ENCODE measurements at regions of chr9 and their contacts with region 1.

Region 1: DNA sequence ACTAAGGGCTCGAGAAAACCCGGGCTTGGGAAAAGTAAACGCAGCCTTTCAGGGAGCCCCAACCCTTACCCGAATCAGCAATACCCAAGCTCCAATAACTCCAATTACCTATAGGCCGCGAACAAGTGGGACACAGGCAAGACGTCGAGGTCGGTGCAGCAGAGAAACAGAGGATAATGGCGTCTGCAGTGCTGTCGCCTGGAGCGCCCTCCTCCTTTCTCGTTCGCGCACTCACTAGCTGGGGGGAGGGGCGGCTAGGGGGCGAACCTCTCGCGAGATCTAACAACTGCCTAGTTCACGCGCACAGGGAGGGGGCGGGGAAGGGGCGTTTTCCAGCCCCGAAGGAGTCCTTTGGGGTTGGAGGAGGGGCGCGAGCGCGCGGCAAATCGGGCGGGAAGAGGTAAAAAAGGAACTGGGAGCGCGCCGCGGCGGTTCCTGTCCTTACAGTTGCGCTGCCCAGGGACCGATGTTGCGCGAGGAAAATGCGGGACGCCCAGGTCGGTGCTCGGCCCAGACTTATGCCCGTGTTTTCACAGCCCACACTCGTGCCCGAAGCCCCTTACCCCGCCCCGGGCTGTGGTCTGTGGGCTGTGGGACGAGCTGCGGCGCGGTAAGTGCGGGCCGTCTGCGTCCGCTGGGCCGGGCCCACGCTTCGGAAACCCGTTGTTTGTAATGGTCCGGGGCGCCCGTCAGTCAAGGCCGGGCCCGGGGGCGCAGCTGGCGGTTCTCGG is at the start of gene RMI1:
- H3K4me3 ChIP-seq: peak within 1 kb of the TSS; percentile 98
- H3K27ac ChIP-seq: peak within 1 kb of the TSS; percentile 99
- H3K4me1 ChIP-seq: peaks cover 2% of the 10 kb centered on the region; the same call in 1 of the 2 replicates
- CTCF ChIP-seq: peak; percentile 77

Region 2: DNA sequence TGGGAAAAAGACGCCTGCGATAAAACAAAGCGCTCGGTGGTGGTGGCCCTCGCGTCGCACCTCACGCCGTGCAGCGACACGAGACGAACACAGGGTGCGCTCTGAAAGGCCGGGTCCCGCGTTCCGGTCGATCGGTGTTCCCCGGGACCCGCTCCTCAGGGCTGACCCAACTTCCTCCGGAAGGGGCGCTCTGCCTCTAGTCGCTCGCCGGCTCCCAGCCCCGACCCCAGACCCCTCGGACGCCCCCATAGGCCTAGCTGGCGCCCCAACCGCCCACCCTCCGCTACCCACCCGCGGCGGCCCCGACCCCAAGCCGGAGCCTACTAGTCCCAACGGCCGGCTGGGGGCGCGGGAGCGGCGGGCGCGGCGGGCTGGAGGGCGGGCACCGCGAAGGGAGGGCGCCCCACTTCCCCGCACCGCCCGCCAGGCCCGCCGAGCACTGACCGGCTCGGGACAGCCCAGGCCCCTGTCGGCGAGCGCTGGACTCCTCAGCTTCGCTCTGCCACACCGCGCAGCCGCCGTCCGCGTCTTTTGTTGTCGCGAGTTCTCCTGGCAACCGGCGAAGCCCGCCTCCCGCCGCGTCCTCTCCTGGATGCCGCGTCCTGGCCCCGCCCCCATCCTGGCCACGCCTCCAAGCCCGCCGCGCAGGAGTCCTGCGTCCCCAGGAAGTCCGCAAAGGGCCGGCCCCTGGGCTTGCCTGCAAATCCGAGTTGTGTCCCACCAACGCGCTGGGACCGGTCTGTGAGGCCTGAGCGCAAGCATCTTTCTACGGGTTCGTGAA is 59.4 kb before region 1 on chr9 and contains the start of gene KIF27:
- CTCF ChIA-PET with region 1: no interaction called
- POLR2A ChIA-PET with region 1: interaction called, 10 read pairs
- H3K4me3 ChIP-seq: peak within 1 kb of the TSS; percentile 50
- H3K27ac ChIP-seq: peak within 1 kb of the TSS; percentile 79
- H3K4me1 ChIP-seq: peaks cover 2% of the 10 kb centered on the region; the same call in 1 of the 2 replicates
- CTCF ChIP-seq: peak; percentile 62

Region 3: GRCh38 chr9:83956434-83957247 is 23.9 kb before region 1 on chr9:
- CTCF ChIA-PET with region 1: interaction called, 3 read pairs
- POLR2A ChIA-PET with region 1: interaction called, 57 read pairs
- H3K4me3 ChIP-seq: peak overlapping the region; percentile 78
- H3K27ac ChIP-seq: peak overlapping the region; percentile 86
- H3K4me1 ChIP-seq: no peaks in the 10 kb centered on the region
- CTCF ChIP-seq: no peak

Region 4: DNA sequence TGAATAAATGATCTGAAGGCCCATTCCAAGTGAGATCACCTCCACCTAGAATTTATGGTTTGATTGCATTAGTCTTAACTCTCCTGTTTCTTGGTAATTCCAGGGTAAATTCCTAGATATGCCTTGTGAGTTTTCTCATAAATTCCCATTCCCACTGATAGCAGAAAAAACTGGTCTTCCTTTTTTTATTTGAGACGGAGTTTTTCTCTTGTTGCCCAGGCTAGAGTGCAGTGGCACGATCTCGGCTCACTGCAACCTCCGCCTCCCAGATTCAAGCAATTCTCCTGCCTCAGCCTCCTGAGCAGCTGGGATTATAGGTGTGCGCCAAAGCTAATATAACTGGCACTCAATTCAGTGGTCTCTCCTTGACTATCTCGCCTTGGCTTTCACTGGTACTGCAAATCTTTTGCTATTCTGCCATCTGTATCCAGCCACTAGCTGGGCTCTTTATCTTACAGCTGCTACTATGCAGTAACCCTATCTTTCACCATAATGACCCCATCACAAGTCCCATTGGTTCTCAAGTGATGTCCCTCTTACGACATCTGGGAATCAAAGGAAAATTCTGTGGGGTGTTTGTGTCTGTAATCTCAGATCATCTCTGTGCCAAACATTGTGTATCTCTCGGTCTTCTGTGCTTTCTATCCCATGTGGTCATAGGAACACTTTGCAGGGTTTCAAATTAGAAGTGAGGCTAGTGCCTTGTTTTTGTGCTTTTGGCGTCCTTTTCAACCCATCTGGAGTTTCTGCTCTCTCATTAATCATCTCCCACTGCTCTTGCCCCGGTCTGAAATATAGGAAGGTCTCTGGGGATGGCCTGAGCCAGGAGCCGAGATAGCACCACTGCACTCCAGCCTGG is 15.0 kb before region 1 on chr9:
- CTCF ChIA-PET with region 1: interaction called, 4 read pairs
- POLR2A ChIA-PET with region 1: interaction called, 57 read pairs
- H3K4me3 ChIP-seq: no peak overlapping the region
- H3K27ac ChIP-seq: no peak overlapping the region
- H3K4me1 ChIP-seq: no peaks in the 10 kb centered on the region
- CTCF ChIP-seq: no peak

Region 5: DNA sequence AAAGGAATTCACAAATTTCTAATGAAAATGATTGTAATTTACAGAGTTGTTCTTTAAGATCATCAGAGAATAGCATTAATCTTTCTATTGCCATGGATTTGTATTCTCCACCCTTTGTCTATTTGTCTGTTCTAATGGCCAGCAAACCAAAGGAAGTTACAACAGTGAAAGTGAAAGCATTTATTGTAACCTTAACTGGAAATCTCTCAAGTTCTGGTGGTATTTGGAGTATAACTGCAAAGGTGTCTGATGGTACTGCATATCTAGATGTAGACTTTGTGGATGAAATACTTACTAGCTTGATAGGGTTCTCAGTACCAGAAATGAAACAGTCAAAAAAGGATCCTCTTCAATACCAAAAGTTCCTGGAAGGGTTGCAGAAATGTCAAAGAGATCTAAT is 21.8 kb after region 1 on chr9:
- CTCF ChIA-PET with region 1: no interaction called
- POLR2A ChIA-PET with region 1: interaction called, 10 read pairs
- H3K4me3 ChIP-seq: no peak overlapping the region
- H3K27ac ChIP-seq: no peak overlapping the region
- H3K4me1 ChIP-seq: no peaks in the 10 kb centered on the region
- CTCF ChIP-seq: no peak

Region 6: DNA sequence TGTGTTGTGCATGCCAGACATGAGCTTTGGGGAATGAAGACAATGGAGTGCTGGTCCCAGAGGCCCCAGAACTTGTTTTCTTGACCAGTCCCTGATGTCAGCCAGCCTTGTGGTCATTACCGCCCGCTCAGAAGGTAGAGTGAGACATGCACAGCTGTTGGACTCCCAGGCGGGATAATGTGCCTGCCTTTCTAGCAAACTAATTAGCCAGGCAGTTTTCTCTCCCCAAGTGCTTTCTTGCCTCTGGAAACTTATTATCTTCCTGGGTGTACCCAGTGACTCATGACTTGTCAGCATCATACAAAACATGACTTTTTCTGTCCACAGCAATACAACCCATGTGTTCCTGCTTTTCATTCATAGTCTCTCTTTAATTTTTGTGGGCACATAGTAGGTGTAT is 131.2 kb after region 1 on chr9:
- CTCF ChIA-PET with region 1: no interaction called
- POLR2A ChIA-PET with region 1: no interaction called
- H3K4me3 ChIP-seq: no peak overlapping the region
- H3K27ac ChIP-seq: no peak overlapping the region
- H3K4me1 ChIP-seq: no peaks in the 10 kb centered on the region
- CTCF ChIP-seq: no peak

Region 7: DNA sequence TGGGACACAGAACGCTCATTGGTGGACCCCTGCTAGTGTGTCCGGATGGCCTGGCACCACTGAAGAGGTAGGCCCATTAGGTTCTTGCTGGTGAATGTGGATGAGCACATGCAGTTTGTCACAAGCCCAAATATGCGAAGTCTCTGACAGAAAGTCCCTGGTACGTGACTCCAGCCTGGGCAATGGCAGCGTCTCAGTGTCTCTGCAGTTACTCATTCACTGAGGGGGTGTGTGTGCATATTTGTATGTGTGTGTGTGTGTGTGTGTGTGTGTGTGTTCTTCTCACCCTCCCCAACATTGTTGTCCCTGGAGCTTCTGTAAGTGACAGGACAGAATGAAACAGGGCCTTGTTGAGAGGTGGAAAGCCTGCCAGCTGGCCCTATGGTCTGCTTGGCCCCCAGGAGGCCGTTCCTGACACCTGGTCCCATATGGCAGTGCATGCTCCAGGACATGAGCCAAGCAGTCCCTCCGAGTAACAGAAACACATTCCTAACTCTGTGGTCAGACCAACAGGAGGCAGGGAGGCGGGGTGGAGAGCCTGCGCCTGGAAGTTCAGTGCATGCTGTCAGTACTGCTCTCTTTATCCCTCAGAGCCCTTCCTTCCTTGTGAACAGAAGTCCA is 190.1 kb after region 1 on chr9:
- CTCF ChIA-PET with region 1: interaction called, 10 read pairs
- POLR2A ChIA-PET with region 1: interaction called, 4 read pairs
- H3K4me3 ChIP-seq: no peak overlapping the region
- H3K27ac ChIP-seq: no peak overlapping the region
- H3K4me1 ChIP-seq: no peaks in the 10 kb centered on the region
- CTCF ChIP-seq: no peak

Region 8: DNA sequence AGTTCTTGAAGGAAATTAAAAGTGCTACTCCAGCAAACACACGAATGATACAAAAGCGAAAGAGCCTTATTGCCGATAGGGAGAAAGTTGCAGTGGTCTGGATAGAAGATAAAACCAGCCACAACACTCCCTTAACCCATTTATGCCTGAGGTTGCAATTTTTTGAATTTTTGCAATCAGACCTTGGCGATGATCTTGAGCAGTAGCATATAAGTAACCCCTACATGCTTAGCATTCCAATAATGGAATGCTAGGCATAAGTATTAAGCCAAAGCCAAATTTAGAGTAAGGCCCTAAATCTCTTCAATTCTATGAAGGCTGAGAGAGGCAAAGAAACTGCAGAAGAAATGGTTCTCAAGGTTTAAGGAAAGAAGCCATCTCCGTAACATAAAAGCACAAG is 206.5 kb after region 1 on chr9:
- CTCF ChIA-PET with region 1: no interaction called
- POLR2A ChIA-PET with region 1: interaction called, 16 read pairs
- H3K4me3 ChIP-seq: no peak overlapping the region
- H3K27ac ChIP-seq: no peak overlapping the region
- H3K4me1 ChIP-seq: no peaks in the 10 kb centered on the region
- CTCF ChIP-seq: no peak

Measured in HEK293 (cell line).